CD4-positive, alpha-beta memory T cell (primary cell): ENCODE measurements at regions of chrX and their contacts with region 1.

Region 1: GRCh38 chrX:107672955-107673378 is 44.7 kb downstream of the PRPS1 start:
- DNase-seq: peak; percentile 91 to 92 (median 92)
- H3K4me3 ChIP-seq: peak overlapping the region; percentile 36 to 70
- H3K4me3 Mint-ChIP-seq: peak overlapping the region; percentile 73 to 92 (median 84)
- H3K27ac ChIP-seq: peak overlapping the region; percentile 97
- H3K27ac Mint-ChIP-seq: peak overlapping the region; percentile 96 to 100 (median 99)
- H3K4me1 ChIP-seq: peaks cover 49% of the 10 kb centered on the region
- H3K4me1 Mint-ChIP-seq: peaks cover 26 to 58% (median 50%) of the 10 kb centered on the region in 4 donors
- H3K27me3 ChIP-seq: no peaks in the 10 kb centered on the region
- H3K27me3 Mint-ChIP-seq: no peaks in the 10 kb centered on the region

Region 2: GRCh38 chrX:107562482-107562881 is 110.5 kb before region 1 on chrX:
- CTCF ChIA-PET with region 1: no interaction called
- POLR2A ChIA-PET with region 1: no interaction called
- intact Hi-C with region 1: no loop called
- DNase-seq: no peak
- H3K4me3 ChIP-seq: no peak overlapping the region
- H3K4me3 Mint-ChIP-seq: no peak overlapping the region
- H3K27ac ChIP-seq: no peak overlapping the region
- H3K27ac Mint-ChIP-seq: peak overlapping the region in 1 of 7 donors; percentile 0
- H3K4me1 ChIP-seq: no peaks in the 10 kb centered on the region
- H3K4me1 Mint-ChIP-seq: no peaks in the 10 kb centered on the region
- H3K27me3 ChIP-seq: no peaks in the 10 kb centered on the region
- H3K27me3 Mint-ChIP-seq: peaks cover 1 to 2% of the 10 kb centered on the region in 2 donors

Region 3: GRCh38 chrX:107662824-107663223 is 10.1 kb before region 1 on chrX:
- CTCF ChIA-PET with region 1: interaction called, 110 read pairs
- POLR2A ChIA-PET with region 1: interaction called, 33 read pairs
- intact Hi-C with region 1: loop called (anchors 2 kb)
- DNase-seq: no peak
- H3K4me3 ChIP-seq: no peak overlapping the region
- H3K4me3 Mint-ChIP-seq: no peak overlapping the region
- H3K27ac ChIP-seq: no peak overlapping the region
- H3K27ac Mint-ChIP-seq: no peak overlapping the region
- H3K4me1 ChIP-seq: no peaks in the 10 kb centered on the region
- H3K4me1 Mint-ChIP-seq: peaks cover 4 to 11% (median 8%) of the 10 kb centered on the region in 4 donors
- H3K27me3 ChIP-seq: no peaks in the 10 kb centered on the region
- H3K27me3 Mint-ChIP-seq: no peaks in the 10 kb centered on the region

Region 4: GRCh38 chrX:107701493-107702121 is 28.6 kb after region 1 on chrX:
- CTCF ChIA-PET with region 1: interaction called, 462 read pairs
- POLR2A ChIA-PET with region 1: interaction called, 1,740 read pairs
- intact Hi-C with region 1: no loop called
- DNase-seq: peak in 1 of 5 donors; percentile 16
- H3K4me3 ChIP-seq: no peak overlapping the region
- H3K4me3 Mint-ChIP-seq: peak overlapping the region in 1 of 8 donors; percentile 28
- H3K27ac ChIP-seq: no peak overlapping the region
- H3K27ac Mint-ChIP-seq: peak overlapping the region in 4 of 7 donors; percentile 5 to 42 (median 9)
- H3K4me1 ChIP-seq: peaks cover 21% of the 10 kb centered on the region
- H3K4me1 Mint-ChIP-seq: peaks cover 16 to 33% (median 30%) of the 10 kb centered on the region in 4 donors
- H3K27me3 ChIP-seq: no peaks in the 10 kb centered on the region
- H3K27me3 Mint-ChIP-seq: no peaks in the 10 kb centered on the region

Region 5: DNA sequence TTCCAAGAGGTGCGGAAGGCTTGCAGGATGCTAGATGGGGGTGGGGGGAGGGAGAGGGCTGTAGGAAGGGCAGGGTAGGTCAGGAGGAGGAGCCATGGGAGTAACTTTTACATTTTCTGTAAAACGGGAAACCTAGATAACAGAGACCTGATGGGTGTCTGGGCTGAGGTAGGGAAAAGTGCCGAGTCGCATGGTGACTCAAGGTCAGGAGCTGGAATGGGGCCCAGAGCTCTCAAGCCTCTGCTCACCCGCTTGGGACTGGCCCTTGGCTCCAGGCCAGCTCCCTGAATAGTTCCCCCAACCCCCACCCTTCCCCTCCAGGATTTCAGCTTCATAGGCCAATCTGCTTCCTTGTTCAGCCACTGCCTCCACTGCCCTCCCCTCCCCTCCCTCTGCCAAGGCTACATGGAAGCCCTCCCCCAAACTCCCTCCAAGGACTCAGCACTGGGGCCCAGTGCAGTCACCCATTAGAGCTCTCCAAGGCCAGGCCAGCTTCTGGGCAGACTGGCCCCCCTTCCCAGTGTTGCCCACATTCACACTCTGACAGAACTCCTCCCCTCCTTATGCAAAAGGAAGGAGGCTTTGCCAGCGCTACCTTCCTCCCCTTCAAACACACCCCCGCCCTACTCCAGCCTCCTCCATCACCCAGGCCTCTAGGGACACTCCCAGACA is 59.0 kb after region 1 on chrX:
- CTCF ChIA-PET with region 1: interaction called, 10 read pairs
- POLR2A ChIA-PET with region 1: interaction called, 10 read pairs
- intact Hi-C with region 1: no loop called
- DNase-seq: no peak
- H3K4me3 ChIP-seq: no peak overlapping the region
- H3K4me3 Mint-ChIP-seq: no peak overlapping the region
- H3K27ac ChIP-seq: no peak overlapping the region
- H3K27ac Mint-ChIP-seq: peak overlapping the region in 1 of 7 donors; percentile 79
- H3K4me1 ChIP-seq: no peaks in the 10 kb centered on the region
- H3K4me1 Mint-ChIP-seq: peaks cover 0 to 6% (median 2%) of the 10 kb centered on the region in 4 donors
- H3K27me3 ChIP-seq: no peaks in the 10 kb centered on the region
- H3K27me3 Mint-ChIP-seq: no peaks in the 10 kb centered on the region

Region 6: GRCh38 chrX:107776649-107777535 is 103.9 kb after region 1 on chrX:
- CTCF ChIA-PET with region 1: interaction called, 245 read pairs
- POLR2A ChIA-PET with region 1: interaction called, 82 read pairs
- intact Hi-C with region 1: loop called (anchors 1 kb)
- DNase-seq: peak; percentile 83 to 85 (median 84)
- H3K4me3 ChIP-seq: peak overlapping the region; percentile 47 to 48
- H3K4me3 Mint-ChIP-seq: peak overlapping the region; percentile 86 to 98 (median 92)
- H3K27ac ChIP-seq: peak overlapping the region; percentile 52
- H3K27ac Mint-ChIP-seq: peak overlapping the region; percentile 81 to 96 (median 93)
- H3K4me1 ChIP-seq: peaks cover 21% of the 10 kb centered on the region
- H3K4me1 Mint-ChIP-seq: peaks cover 5 to 27% (median 14%) of the 10 kb centered on the region in 4 donors
- H3K27me3 ChIP-seq: no peaks in the 10 kb centered on the region
- H3K27me3 Mint-ChIP-seq: no peaks in the 10 kb centered on the region

Region 7: GRCh38 chrX:108091266-108091877 is 418.4 kb after region 1 on chrX and contains the starts of genes ATG4A and PSMD10:
- CTCF ChIA-PET with region 1: no interaction called
- POLR2A ChIA-PET with region 1: no interaction called
- intact Hi-C with region 1: loop called (anchors 5 kb)
- DNase-seq: peak; percentile 86 to 96 (median 90)
- H3K4me3 ChIP-seq: peak within 1 kb of the TSS; percentile 48 to 75
- H3K4me3 Mint-ChIP-seq: no peak within 1 kb of the TSS
- H3K27ac ChIP-seq: peak within 1 kb of the TSS; percentile 81
- H3K27ac Mint-ChIP-seq: no peak within 1 kb of the TSS
- H3K4me1 ChIP-seq: peaks cover 22% of the 10 kb centered on the region
- H3K4me1 Mint-ChIP-seq: peaks cover 5 to 17% (median 7%) of the 10 kb centered on the region in 4 donors
- H3K27me3 ChIP-seq: no peaks in the 10 kb centered on the region
- H3K27me3 Mint-ChIP-seq: no peaks in the 10 kb centered on the region
- total RNA-seq, gene ATG4A: 7.6 to 8.1 TPM
- total RNA-seq, gene PSMD10: 29.0 to 32.6 TPM